OCI-LY7 (cell line): ENCODE measurements at regions of chr15 and their contacts with region 1.

Region 1: DNA sequence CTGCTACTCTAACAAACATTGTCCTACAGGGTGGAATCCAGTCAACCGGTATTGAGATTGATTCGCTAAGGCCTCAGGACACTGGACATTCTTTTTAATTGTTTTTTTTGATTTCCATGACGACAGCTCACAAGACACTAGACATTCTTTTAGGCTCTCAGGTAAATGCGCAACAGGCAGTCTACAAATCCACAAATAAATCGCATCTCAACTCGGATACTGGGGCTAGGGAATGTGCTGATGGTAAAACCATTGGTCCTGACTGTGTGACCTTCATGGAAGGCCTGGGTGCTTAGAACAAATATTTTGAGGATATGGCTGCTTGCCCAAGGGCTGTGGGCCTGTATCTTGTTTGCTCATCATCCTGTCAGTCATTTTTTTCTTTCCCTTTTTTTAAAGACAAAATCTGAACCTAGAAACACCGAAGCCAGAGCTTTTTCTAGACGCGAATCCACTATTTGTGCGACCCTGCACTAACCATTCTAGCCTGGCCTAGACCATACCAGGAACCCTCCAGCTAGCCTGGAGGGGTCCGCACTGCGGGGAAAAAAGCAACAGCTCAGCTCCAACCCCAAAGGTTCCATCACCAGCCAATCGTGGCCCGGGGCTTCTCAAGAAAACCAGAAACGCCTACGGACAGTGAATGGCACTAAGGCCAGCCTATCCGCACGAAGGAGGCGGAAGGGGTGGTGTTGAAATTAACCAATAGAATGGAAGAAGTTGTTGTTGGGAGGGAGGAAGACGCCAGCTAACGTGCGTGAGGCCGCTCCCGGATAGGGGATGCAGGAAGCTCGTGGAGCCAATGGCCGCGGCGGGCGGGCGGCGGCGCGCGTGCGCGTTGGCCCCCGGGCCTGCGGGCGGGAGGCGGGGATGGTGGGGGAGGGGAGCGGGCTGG is 18.1 kb upstream of the CHD2 start:
- DNase-seq: peak; percentile 99
- H3K4me3 ChIP-seq: peak overlapping the region; percentile 86
- H3K27ac ChIP-seq: peak overlapping the region; percentile 82
- H3K4me1 ChIP-seq: peaks cover 70% of the 10 kb centered on the region
- CTCF ChIP-seq: no peak

Region 2: DNA sequence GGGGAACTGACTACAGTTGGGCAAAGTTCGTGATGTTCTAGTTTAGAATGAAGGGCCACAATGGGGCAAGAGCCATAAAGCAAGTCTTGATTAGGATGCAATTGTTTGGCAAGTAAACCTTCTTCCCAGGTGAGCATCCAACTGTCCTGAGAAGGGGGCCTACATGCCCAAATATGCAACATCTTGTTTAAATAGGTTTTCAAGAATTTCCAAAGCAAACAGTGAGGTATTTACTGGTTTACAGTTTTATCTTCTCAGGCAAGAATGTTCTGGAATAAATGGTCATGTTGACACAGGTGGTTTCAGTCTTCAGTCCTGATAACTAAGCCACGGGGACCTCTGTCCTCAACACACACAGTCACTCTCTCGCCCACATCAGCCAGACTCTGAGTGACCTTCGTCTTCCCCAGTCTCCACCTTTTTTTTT is 136.2 kb before region 1 on chr15:
- CTCF ChIA-PET with region 1: no interaction called
- POLR2A ChIA-PET with region 1: no interaction called
- intact Hi-C with region 1: no loop called
- DNase-seq: no peak
- H3K4me3 ChIP-seq: no peak overlapping the region
- H3K27ac ChIP-seq: no peak overlapping the region
- H3K4me1 ChIP-seq: no peaks in the 10 kb centered on the region
- CTCF ChIP-seq: no peak

Region 3: GRCh38 chr15:92808978-92809879 is 72.8 kb before region 1 on chr15:
- CTCF ChIA-PET with region 1: interaction called, 6 read pairs
- POLR2A ChIA-PET with region 1: interaction called, 154 read pairs
- intact Hi-C with region 1: loop called (anchors 1 kb)
- DNase-seq: peak; percentile 99
- H3K4me3 ChIP-seq: peak overlapping the region; percentile 73
- H3K27ac ChIP-seq: peak overlapping the region; percentile 98
- H3K4me1 ChIP-seq: peaks cover 51% of the 10 kb centered on the region
- CTCF ChIP-seq: peak; percentile 91

Region 4: DNA sequence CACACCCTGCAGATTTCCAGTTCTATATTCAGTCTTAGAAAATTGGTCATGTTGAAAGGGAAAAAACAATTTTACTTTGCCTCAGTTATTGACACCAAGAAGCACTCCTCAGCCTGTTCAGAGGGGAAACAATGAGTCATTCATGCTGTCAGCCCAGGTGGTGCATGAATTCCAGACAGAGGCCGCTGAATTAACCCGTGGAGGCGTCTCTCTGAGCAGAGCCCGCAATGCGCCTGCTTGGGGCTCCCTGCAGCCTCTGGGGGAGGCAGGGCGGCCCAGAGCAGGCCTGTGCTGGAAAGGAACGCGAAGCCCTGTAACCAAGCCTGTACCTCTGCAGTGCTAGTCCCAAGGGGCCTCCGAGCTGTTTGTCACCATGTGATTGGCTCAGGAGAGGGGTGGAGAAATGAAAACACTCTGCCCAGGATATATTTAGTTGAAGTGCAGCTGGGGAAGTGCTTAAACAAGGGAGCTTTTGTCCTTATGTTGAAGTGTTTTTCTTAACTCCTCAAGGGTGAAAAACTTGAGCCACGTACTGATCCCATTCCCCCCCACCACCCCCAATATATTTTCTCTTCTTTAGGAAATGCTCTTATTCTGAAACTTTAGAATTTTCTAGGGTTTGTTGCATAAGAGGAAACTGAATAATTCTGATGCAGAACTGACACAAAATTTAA is 50.3 kb before region 1 on chr15:
- CTCF ChIA-PET with region 1: interaction called, 5 read pairs
- POLR2A ChIA-PET with region 1: interaction called, 203 read pairs
- intact Hi-C with region 1: loop called (anchors 1 kb)
- DNase-seq: peak; percentile 100
- H3K4me3 ChIP-seq: peak overlapping the region; percentile 64
- H3K27ac ChIP-seq: peak overlapping the region; percentile 99
- H3K4me1 ChIP-seq: peaks cover 72% of the 10 kb centered on the region
- CTCF ChIP-seq: no peak

Region 5: GRCh38 chr15:92845126-92845508 is 36.9 kb before region 1 on chr15:
- CTCF ChIA-PET with region 1: interaction called, 3 read pairs
- POLR2A ChIA-PET with region 1: interaction called, 65 read pairs
- intact Hi-C with region 1: no loop called
- DNase-seq: peak; percentile 73
- H3K4me3 ChIP-seq: peak overlapping the region; percentile 28
- H3K27ac ChIP-seq: peak overlapping the region; percentile 69
- H3K4me1 ChIP-seq: peaks cover 68% of the 10 kb centered on the region
- CTCF ChIP-seq: no peak

Region 6: DNA sequence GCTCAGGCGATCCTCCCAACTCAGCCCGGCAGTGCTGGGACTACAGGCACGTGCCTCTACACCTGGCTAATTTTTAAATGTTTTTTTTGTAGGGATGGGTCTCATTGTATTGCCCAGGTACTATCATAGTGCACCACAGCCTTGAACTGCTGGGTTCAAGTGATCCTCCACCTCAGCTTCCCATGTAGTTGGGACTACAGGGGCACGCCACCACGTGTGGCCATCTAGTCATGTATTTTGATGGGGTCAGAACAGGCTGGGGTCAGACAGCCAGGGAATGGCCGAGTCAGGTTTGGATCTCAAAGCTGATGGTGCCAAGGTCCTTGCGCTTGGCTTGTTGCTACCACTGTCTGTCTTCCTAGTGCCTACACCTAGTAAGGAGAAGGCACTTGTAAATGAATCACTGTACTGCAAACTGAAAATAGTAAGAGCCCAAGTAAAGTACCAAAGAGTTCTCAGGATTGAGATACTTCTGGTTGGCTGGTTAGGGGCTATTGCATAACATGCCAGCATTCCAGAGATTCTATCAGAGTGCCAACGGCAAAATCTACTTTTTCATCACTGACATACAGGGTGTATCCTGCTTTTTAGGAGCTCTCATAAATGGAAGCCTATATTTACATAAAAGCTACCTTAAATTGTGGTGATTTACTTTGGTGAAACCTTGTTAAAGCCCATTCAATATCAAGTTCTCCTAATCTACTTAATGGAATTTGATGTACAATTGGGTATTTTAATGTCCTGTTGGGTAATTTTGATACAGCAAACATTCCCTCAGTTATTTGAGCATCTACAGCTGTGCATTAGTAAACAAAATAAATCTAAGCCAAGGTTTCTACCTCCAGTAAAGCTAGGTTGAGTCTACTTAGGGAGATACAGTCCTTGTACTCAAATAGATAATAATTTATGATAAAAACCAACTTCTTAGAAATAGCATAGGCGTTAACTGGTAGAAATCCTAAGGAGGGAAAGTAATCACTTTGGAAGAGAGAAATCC is 12.8 kb before region 1 on chr15:
- CTCF ChIA-PET with region 1: no interaction called
- POLR2A ChIA-PET with region 1: interaction called, 36 read pairs
- intact Hi-C with region 1: no loop called
- DNase-seq: no peak
- H3K4me3 ChIP-seq: no peak overlapping the region
- H3K27ac ChIP-seq: no peak overlapping the region
- H3K4me1 ChIP-seq: peaks cover 22% of the 10 kb centered on the region
- CTCF ChIP-seq: no peak

Region 7: DNA sequence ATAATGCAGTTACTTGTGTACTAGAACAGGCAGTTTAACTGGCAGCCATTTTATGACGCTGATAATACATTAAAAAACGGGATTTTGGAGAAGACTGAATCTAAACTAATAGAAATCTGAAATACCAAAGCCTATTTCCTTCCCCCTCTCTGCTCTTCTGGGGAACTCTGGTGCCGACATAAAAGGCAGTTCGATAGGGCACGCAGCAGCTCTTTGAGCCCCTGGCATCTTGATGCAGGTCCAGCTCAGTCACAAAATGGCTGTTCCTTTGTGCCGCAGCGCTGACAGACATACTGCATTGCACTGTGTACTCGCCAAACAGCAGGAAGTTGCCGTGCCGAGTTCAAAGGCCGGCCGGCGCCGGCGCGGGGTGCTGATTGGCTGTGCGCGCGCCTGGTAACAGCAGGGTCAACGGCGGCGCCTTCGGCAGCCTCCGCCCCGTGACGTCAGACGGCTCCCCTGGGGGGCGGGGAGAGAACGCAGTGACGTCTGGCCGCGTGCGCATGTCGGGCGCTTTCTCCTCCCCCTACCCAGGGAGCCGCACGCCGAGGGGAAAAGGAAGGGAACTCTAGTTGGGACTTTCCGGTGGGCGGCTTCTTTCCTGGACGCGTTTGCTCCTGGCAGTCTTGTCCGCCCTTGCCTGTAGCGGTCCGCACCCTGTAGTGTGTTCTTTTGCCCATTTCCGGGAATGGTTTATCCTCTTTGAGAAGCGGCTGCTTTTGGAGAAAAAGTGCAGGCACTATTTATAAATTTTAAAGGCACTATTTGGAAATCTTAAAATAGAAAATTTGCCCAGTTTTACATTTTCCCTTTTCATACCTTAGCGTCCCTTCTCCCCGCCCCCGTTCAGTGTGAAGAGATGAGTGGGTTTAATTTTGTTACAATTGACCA is 22.1 kb after region 1 on chr15:
- CTCF ChIA-PET with region 1: interaction called, 8 read pairs
- POLR2A ChIA-PET with region 1: interaction called, 147 read pairs
- intact Hi-C with region 1: loop called (anchors 1 kb)
- DNase-seq: peak; percentile 99
- H3K4me3 ChIP-seq: peak overlapping the region; percentile 92
- H3K27ac ChIP-seq: peak overlapping the region; percentile 94
- H3K4me1 ChIP-seq: peaks cover 47% of the 10 kb centered on the region
- CTCF ChIP-seq: no peak

Region 8: GRCh38 chr15:93018580-93018979 is 136.5 kb after region 1 on chr15:
- CTCF ChIA-PET with region 1: no interaction called
- POLR2A ChIA-PET with region 1: no interaction called
- intact Hi-C with region 1: no loop called
- DNase-seq: no peak
- H3K4me3 ChIP-seq: no peak overlapping the region
- H3K27ac ChIP-seq: no peak overlapping the region
- H3K4me1 ChIP-seq: no peaks in the 10 kb centered on the region
- CTCF ChIP-seq: no peak

Region 9: GRCh38 chr15:93121973-93122910 is 240.2 kb after region 1 on chr15:
- CTCF ChIA-PET with region 1: no interaction called
- POLR2A ChIA-PET with region 1: no interaction called
- intact Hi-C with region 1: no loop called
- DNase-seq: no peak
- H3K4me3 ChIP-seq: no peak overlapping the region
- H3K27ac ChIP-seq: no peak overlapping the region
- H3K4me1 ChIP-seq: no peaks in the 10 kb centered on the region
- CTCF ChIP-seq: no peak